AG04449 (cell line): ENCODE measurements at regions of chr3 and their contacts with region 1.

Region 1: DNA sequence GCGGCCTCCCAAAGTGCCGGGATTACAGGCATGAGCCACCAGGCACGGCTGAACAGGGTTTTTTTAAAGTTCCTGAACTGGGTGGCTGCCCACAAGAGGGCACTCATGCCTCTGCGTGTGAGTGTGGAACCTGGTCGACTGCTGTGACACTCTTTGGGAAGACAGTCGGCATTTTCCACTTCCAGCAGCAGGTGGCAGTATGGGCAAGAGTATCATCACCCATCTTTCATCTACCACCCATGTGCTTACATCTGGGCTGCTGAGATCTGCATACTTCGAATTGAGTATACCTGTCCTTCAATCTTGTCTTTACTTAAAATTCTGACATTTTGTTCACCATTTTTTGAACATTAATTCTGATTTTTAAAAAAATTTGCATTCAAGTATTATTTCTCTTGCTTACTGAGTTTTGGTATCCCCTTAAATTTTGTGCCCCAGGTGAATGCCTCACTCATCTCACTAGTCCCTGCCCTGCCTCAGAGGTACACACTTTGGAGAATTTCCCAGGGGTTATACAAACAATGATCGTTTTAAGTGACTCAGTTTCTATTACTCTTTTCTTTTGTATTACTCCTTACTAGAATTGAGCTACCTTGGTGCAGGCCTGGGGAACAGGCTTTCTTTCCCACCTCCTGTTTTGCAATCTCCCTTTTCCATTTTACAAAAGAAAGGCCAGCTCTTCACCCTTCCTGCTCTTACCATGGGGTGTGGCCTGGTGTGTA is 11.8 kb downstream of the CLEC3B start:
- DNase-seq: peak; percentile 63
- H3K4me3 ChIP-seq: no peak overlapping the region
- CTCF ChIP-seq: peak; percentile 88

Region 2: DNA sequence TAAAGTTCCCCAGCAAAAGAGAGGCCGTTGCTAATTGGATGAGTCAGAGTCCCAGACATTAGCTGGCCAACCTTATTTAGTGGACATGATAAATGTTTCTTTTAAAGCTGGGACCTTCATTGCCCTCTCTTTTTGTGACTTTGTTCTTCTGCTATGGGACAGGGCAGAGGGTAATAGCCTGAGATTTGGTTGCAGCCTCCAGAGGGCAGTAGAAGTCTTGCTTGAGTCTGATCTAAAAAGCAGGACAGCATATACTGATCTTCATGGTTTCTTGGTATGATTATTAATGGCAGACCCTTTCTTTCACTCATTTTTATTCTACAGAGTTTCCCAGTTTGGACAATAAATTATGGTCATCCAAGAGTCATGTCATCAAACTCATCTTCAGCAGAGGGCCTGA is 508.0 kb before region 1 on chr3:
- CTCF ChIA-PET with region 1: interaction called, 20 read pairs
- POLR2A ChIA-PET with region 1: no interaction called
- DNase-seq: no peak
- H3K4me3 ChIP-seq: no peak overlapping the region
- CTCF ChIP-seq: no peak

Region 3: GRCh38 chr3:45011756-45012508 is 26.0 kb before region 1 on chr3:
- CTCF ChIA-PET with region 1: interaction called, 23 read pairs
- POLR2A ChIA-PET with region 1: no interaction called
- DNase-seq: peak; percentile 79
- H3K4me3 ChIP-seq: peak overlapping the region; percentile 34
- CTCF ChIP-seq: no peak

Region 4: GRCh38 chr3:45055411-45056143 is 17.7 kb after region 1 on chr3:
- CTCF ChIA-PET with region 1: interaction called, 98 read pairs
- POLR2A ChIA-PET with region 1: no interaction called
- DNase-seq: no peak
- H3K4me3 ChIP-seq: no peak overlapping the region
- CTCF ChIP-seq: peak; percentile 5

Region 5: GRCh38 chr3:45210308-45211041 is 172.6 kb after region 1 on chr3:
- CTCF ChIA-PET with region 1: interaction called, 621 read pairs
- POLR2A ChIA-PET with region 1: interaction called, 3 read pairs
- DNase-seq: no peak
- H3K4me3 ChIP-seq: no peak overlapping the region
- CTCF ChIP-seq: peak; percentile 94

Region 6: GRCh38 chr3:45224824-45225464 is 187.0 kb after region 1 on chr3:
- CTCF ChIA-PET with region 1: interaction called, 621 read pairs
- POLR2A ChIA-PET with region 1: no interaction called
- DNase-seq: no peak
- H3K4me3 ChIP-seq: peak overlapping the region; percentile 75
- CTCF ChIP-seq: peak; percentile 86

Region 7: DNA sequence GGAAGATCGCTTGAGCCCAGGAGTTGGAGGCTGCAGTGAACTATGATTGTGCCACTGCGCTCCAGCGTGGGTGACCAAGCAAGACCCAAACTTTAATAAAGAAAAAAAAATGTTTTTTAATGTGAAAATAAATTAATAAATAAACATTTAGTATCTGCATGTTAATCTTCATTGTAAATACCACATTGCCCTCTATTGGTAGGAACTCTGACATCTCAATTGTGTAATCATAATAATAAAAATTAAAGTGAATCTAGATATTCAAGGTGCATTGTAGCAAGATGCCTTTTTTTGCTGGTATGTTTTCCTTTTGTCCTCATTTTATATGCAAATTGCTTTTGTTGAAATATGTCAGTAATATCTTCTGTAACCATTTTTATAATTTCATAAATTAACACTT is 461.6 kb after region 1 on chr3:
- CTCF ChIA-PET with region 1: interaction called, 380 read pairs
- POLR2A ChIA-PET with region 1: no interaction called
- DNase-seq: no peak
- H3K4me3 ChIP-seq: no peak overlapping the region
- CTCF ChIP-seq: peak; percentile 17